Heart right ventricle (tissue), 16 donors: ENCODE measurements at regions of chr1 and their contacts with region 1.

Region 1: DNA sequence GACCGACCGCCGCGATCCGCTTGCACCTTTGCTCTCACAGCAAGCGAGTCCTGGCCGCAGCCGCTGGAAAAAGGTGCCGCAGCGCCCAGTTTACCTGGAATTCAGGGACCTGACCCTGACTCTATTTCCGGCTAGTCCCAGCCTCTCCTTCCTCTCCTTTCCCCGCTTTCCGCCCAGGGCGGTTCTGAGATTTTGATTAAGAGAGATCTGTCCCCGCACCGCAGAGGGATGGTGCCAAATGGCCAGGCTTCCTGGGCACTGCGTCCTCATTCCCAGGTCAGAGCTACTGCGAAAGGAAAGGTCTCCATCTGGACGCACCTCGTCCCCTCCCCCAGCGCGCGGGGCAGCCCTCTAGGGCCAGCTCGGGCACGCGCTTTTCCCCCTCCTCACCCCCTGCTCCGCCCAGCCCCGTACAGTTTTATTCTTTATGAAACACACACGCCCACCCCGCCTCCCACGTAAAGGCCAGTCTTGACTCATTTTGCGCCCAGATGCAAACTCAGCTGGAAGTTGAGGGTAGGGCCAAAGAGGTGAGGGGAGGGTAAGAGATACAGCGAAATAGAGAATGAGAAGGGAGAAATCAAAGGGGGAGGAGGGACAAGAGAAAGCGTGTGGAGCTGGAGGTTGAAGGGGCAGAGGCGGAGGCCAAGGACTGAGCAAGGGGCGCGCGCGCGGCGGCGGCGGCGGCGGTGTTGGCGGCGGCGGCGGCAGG is 411.8 kb upstream of the ESRRG start:
- DNase-seq: peak in 1 of 2 donors; percentile 25
- ATAC-seq: peak; percentile 27 to 64 (median 54)
- H3K4me3 ChIP-seq: peak overlapping the region; percentile 10 to 55 (median 49)
- H3K27ac ChIP-seq: peak overlapping the region in 9 of 10 donors; percentile 2 to 80 (median 51)
- H3K4me1 ChIP-seq: peaks cover 0 to 15% (median 1%) of the 10 kb centered on the region in 9 donors
- H3K27me3 ChIP-seq: peaks cover 0 to 69% (median 61%) of the 10 kb centered on the region in 7 donors
- CTCF ChIP-seq: no peak

Region 2: DNA sequence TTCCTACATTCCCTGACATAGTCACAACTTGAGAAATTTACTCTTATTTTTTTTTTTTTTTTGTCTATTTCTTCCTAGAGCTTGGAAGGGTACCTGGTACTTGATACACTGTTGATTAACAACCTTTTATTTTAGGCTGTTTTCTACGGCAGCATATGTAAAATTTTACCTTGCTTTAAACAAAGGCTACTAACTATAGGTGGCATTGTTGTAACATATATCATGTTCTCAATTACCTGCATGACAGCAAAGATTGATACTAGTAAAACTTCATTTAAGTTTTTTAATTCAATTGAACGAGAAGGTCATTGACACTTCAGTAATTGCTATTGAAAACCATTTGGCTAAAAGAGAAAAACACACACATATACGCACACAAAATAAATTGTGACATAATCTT is 173.5 kb before region 1 on chr1:
- intact Hi-C with region 1: loop called in 1 of 10 experiments (anchors 5 kb)
- DNase-seq: no peak
- ATAC-seq: no peak
- H3K4me3 ChIP-seq: no peak overlapping the region
- H3K27ac ChIP-seq: no peak overlapping the region
- H3K4me1 ChIP-seq: no peaks in the 10 kb centered on the region
- H3K27me3 ChIP-seq: no peaks in the 10 kb centered on the region
- CTCF ChIP-seq: peak in 1 of 9 donors; percentile 6

Region 3: DNA sequence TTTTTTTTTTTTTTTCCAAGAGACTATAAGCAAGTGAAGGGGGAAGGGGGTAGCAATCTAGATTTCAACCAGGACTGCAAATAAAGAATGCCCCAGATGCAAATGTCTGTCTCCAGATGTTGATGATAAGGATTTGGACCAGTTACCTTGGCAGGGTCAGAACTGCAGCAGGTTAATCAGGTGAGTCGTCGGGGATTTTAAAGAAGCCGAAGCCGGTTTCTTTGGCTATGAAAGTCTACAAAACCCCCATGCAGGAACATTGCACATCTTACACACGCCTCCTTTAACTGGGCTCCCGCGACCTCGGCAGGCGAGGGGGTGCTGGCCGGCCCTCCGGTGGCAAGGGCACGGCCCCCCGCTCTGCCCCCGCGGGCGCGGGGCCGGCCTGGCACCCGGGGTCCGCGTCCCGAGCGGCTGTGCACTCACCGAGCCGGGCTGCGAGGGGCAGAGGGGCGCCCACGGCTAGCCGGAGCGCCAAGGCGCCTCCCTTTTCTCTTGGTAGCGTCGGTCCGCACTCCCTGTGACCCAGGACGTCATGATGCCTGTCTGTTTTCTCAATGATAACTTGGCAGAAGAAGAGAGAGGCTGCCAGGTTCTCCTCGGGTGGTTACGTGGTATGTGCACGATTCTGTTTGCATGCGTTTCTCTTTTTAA is 45.5 kb before region 1 on chr1:
- intact Hi-C with region 1: loop called in 1 of 10 experiments (anchors 5 kb)
- DNase-seq: peak; percentile 30 to 32
- ATAC-seq: peak; percentile 73 to 91 (median 84)
- H3K4me3 ChIP-seq: peak overlapping the region; percentile 33 to 66 (median 51)
- H3K27ac ChIP-seq: peak overlapping the region; percentile 76 to 93 (median 90)
- H3K4me1 ChIP-seq: peaks cover 0 to 11% (median 3%) of the 10 kb centered on the region in 9 donors
- H3K27me3 ChIP-seq: peaks cover 0 to 23% (median 3%) of the 10 kb centered on the region in 7 donors
- CTCF ChIP-seq: no peak